Heart right ventricle (tissue), 16 donors: ENCODE measurements at regions of chr5 and their contacts with region 1.

Region 1: DNA sequence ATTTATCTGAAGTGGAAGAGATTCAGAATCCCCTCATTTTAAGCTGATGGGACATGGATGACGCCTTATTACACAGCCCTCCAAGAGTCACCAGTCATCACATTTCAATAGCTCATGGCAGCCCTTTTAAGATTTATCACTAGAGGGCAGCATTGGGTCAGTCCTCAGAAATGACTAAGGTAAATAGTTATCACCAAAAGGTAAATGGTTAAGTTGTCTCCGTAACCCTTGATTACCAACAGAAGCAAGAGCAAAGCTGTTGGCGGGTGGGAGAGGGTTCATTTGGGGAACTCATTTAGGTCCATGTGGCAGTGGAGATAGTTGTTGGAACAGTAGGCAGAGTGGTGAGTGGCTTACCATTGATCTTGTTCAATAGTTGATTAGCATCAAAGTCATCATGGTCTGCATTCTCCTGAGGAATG is 12.0 kb upstream of the C9 start:
- DNase-seq: peak in 1 of 2 donors; percentile 48
- ATAC-seq: peak in 5 of 8 donors; percentile 50 to 61 (median 60)
- H3K4me3 ChIP-seq: no peak overlapping the region
- H3K27ac ChIP-seq: no peak overlapping the region
- H3K4me1 ChIP-seq: peaks cover 0 to 16% (median 0%) of the 10 kb centered on the region in 9 donors
- H3K27me3 ChIP-seq: no peaks in the 10 kb centered on the region
- CTCF ChIP-seq: peak; percentile 54 to 84 (median 74)

Region 2: GRCh38 chr5:39217365-39218281 is 158.7 kb before region 1 on chr5:
- intact Hi-C with region 1: loop called in 2 of 10 experiments (anchors 10 kb)
- DNase-seq: peak; percentile 42 to 74
- ATAC-seq: peak; percentile 68 to 85 (median 80)
- H3K4me3 ChIP-seq: peak overlapping the region in 2 of 10 donors; percentile 8 to 54
- H3K27ac ChIP-seq: peak overlapping the region in 1 of 10 donors; percentile 76
- H3K4me1 ChIP-seq: peaks cover 0 to 85% (median 0%) of the 10 kb centered on the region in 9 donors
- H3K27me3 ChIP-seq: no peaks in the 10 kb centered on the region
- CTCF ChIP-seq: peak; percentile 93 to 96 (median 95)

Region 3: GRCh38 chr5:39224196-39224761 is 152.0 kb before region 1 on chr5:
- intact Hi-C with region 1: loop called in 2 of 10 experiments (anchors 10 kb)
- DNase-seq: no peak
- ATAC-seq: peak in 1 of 8 donors; percentile 76
- H3K4me3 ChIP-seq: no peak overlapping the region
- H3K27ac ChIP-seq: peak overlapping the region in 1 of 10 donors; percentile 59
- H3K4me1 ChIP-seq: peaks cover 0 to 77% (median 0%) of the 10 kb centered on the region in 9 donors
- H3K27me3 ChIP-seq: no peaks in the 10 kb centered on the region
- CTCF ChIP-seq: no peak

Region 4: DNA sequence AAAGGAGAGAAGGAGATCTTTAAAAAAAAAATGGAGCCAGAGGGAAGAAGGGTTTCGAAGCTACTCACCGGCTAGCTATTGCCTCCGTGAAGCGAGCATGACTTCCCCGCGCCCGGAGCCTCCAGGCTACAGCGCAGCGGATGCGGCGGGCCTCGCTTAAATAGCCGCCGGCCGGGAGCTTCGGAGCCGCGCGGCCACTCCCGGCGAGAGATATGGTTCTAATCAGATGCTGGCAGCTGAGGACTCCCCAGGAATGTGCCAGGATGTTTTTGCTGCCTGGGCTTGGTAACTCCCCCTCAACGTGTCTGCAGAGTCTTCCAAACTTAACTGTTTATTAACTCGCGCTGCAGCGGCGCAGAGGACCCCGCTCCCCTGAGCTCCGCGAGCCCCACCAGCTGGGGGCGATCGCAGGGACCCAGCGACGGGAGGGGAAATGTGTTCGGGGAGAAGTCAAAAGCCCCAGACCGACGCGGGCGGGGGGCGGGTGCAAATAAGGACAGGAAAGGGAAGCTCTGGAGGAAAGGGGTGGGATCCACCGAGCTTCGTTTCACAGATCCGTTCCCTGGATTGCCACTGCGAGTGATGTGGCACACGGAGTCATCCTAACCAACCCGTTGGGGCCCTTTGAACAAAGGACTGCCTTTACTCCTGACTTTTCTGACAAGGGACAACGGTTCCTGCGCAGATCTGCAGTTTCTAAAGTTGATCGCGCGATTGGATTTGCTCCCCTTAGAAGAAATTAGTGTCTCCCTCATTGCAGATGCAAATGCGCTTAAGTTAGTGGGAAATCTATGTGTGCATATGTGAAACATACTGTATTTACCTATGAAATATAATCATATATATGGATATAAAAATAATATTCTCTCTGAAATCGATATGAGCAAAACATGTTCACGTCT is 48.7 kb after region 1 on chr5 and contains the start of gene DAB2:
- intact Hi-C with region 1: loop called in 2 of 10 experiments (anchors 2 to 5 kb)
- DNase-seq: peak; percentile 84 to 90
- ATAC-seq: peak; percentile 84 to 91 (median 86)
- H3K4me3 ChIP-seq: peak within 1 kb of the TSS; percentile 39 to 74 (median 64)
- H3K27ac ChIP-seq: peak within 1 kb of the TSS; percentile 67 to 92 (median 84)
- H3K4me1 ChIP-seq: peaks cover 0 to 62% (median 53%) of the 10 kb centered on the region in 9 donors
- H3K27me3 ChIP-seq: peaks cover 0 to 19% (median 0%) of the 10 kb centered on the region in 7 donors
- CTCF ChIP-seq: peak in 8 of 9 donors; percentile 35 to 84 (median 64)
- total RNA-seq, gene DAB2: 14.2 to 64.7 (median 26.6) TPM

Region 5: GRCh38 chr5:39547553-39548154 is 171.3 kb after region 1 on chr5:
- intact Hi-C with region 1: loop called (anchors 1 to 5 kb)
- DNase-seq: peak in 1 of 2 donors; percentile 87
- ATAC-seq: peak in 7 of 8 donors; percentile 59 to 92 (median 84)
- H3K4me3 ChIP-seq: peak overlapping the region in 4 of 10 donors; percentile 5 to 9 (median 5)
- H3K27ac ChIP-seq: peak overlapping the region in 4 of 10 donors; percentile 2 to 41 (median 6)
- H3K4me1 ChIP-seq: peaks cover 0 to 29% (median 7%) of the 10 kb centered on the region in 9 donors
- H3K27me3 ChIP-seq: no peaks in the 10 kb centered on the region
- CTCF ChIP-seq: peak; percentile 45 to 89 (median 78)

Region 6: DNA sequence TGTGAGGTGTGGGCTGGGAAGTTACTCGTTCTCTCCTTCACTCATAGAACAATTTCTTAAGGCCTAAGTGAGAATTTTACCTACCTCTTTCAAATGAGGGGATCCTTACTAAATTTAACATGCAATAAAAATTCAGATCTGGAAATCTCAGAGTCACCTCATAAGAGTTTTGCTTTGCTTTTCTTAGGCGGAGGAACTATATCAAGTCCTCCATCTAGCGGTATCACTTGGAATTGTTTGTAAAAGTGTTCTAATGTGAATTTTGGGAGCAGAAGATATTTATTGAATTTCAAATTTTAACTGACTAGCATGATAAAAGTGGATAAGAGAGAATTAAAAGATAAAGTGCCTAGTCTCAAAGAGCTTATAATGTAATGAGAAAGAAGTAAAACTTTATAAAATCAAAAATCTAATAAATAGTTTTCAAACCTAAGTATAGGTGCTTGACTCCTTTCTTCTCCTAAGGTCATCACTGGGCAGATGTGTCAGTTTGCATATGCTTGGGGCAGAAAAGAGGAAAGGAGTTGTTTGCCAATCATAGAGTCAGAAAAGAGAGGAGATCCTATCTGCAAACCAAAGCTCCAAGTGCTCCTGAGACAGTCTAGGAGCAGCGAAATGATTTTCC is 194.2 kb after region 1 on chr5:
- intact Hi-C with region 1: loop called in 3 of 10 experiments (anchors 2 to 5 kb)
- DNase-seq: no peak
- ATAC-seq: no peak
- H3K4me3 ChIP-seq: no peak overlapping the region
- H3K27ac ChIP-seq: no peak overlapping the region
- H3K4me1 ChIP-seq: peaks cover 0 to 8% (median 0%) of the 10 kb centered on the region in 9 donors
- H3K27me3 ChIP-seq: peaks cover 0 to 13% (median 0%) of the 10 kb centered on the region in 7 donors
- CTCF ChIP-seq: peak; percentile 42 to 78 (median 65)